PC-3 (cell line): ENCODE measurements at regions of chr1 and their contacts with region 1.

Region 1: DNA sequence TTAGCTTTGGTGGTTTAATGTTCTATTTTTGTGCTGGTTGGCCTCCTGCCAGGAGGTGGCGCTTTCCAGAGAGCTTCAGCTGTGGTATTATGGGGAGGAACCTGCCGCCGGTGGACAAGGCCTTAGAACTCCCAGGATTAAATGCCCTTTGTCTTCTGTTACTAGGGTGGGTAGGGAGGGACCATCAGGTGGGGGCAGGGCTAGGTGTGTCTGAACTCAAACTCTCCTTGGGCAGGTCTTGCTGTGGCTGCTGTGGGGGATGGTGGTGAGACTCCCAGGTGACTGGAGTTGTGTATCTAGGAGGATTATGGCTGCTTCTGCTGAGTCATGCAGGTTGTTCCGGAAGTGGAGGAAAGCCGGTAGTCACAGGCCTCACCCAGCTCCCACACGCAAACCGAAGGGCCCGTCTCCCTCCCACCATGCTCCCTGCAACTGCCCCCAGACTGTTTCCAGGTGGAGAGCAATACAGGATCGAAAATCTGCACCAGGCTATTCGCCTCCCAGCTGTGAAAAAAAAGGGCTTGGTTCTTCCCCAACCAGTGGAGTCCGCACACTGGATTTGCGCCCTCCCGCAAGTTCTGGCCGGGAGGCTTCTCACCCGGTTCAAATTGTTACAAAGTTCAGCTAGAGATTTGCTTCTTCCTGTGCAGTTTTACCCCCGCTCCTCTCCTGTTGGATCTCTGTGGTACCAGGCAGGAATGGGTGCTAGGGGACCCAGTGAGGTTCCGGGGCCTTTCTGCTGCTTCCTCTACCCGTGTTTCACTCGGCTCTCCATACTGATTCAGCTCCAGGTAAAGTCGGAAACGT is 220.5 kb downstream of the CENPF start:
- DNase-seq: no peak
- ATAC-seq: no peak
- H3K4me3 ChIP-seq: no peak overlapping the region
- H3K27ac ChIP-seq: no peak overlapping the region
- H3K4me1 ChIP-seq: peaks cover 7% of the 10 kb centered on the region; the same call in 1 of the 2 replicates
- H3K27me3 ChIP-seq: no peaks in the 10 kb centered on the region
- CTCF ChIP-seq: peak; percentile 41; the same call in 1 of the 2 replicates

Region 2: DNA sequence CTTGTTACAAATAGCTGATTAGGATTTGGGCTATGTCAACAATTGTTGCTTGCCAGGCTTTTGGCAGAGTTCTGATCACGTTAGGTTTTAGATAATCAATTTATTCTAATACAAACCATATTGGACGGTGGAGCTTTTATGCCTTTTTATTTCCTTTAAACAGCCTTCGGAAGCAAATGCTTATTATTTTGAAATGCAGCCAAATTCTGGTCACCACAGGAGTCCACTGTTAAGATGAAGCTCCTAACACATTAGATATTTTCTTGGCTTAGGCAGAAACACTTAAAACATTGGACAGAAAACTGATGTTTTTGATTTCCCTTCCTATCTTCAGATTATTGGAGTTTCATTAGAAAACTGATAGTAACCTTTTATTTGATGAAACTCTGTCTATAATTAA is 137.6 kb before region 1 on chr1:
- CTCF ChIA-PET with region 1: no interaction called
- POLR2A ChIA-PET with region 1: no interaction called
- intact Hi-C with region 1: no loop called
- DNase-seq: no peak
- ATAC-seq: no peak
- H3K4me3 ChIP-seq: no peak overlapping the region
- H3K27ac ChIP-seq: no peak overlapping the region
- H3K4me1 ChIP-seq: no peaks in the 10 kb centered on the region
- H3K27me3 ChIP-seq: no peaks in the 10 kb centered on the region
- CTCF ChIP-seq: no peak

Region 3: DNA sequence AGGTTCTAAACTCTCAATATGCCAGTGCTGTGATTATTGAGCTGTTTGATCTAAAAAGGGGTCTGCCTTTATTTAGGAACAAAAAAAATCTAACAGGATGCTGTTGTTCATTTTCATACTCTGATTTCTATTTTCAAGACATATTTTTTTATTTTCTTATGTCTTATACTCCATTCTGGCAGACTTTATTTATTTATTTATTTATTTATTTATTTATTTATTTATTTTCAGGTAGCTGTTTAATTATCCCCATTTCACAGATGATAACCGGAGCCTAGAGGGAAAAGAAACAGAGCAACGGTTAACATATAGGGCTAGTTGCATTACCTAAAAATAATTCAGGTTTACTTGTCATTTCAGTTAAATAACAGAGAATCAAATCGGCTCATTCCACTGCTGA is 46.1 kb before region 1 on chr1:
- CTCF ChIA-PET with region 1: no interaction called
- POLR2A ChIA-PET with region 1: no interaction called
- intact Hi-C with region 1: no loop called
- DNase-seq: no peak
- ATAC-seq: no peak
- H3K4me3 ChIP-seq: no peak overlapping the region
- H3K27ac ChIP-seq: no peak overlapping the region
- H3K4me1 ChIP-seq: no peaks in the 10 kb centered on the region
- H3K27me3 ChIP-seq: no peaks in the 10 kb centered on the region
- CTCF ChIP-seq: no peak

Region 4: GRCh38 chr1:214864896-214865688 is 41.6 kb after region 1 on chr1:
- CTCF ChIA-PET with region 1: no interaction called
- POLR2A ChIA-PET with region 1: no interaction called
- intact Hi-C with region 1: loop called (anchors 1 kb)
- DNase-seq: peak; percentile 99
- ATAC-seq: peak; percentile 93
- H3K4me3 ChIP-seq: no peak overlapping the region
- H3K27ac ChIP-seq: peak overlapping the region; percentile 67
- H3K4me1 ChIP-seq: peaks cover 48% of the 10 kb centered on the region
- H3K27me3 ChIP-seq: no peaks in the 10 kb centered on the region
- CTCF ChIP-seq: no peak

Region 5: GRCh38 chr1:214901718-214902117 is 78.2 kb after region 1 on chr1:
- CTCF ChIA-PET with region 1: no interaction called
- POLR2A ChIA-PET with region 1: no interaction called
- intact Hi-C with region 1: loop called (anchors 2 kb)
- DNase-seq: peak; percentile 99
- ATAC-seq: peak; percentile 85
- H3K4me3 ChIP-seq: peak overlapping the region; percentile 48
- H3K27ac ChIP-seq: peak overlapping the region; percentile 88
- H3K4me1 ChIP-seq: peaks cover 44% of the 10 kb centered on the region
- H3K27me3 ChIP-seq: no peaks in the 10 kb centered on the region
- CTCF ChIP-seq: no peak; the same call in 1 of the 2 replicates